Activated T-helper 1 cell treated with anti-CD3 and anti-CD28 coated beads, Interleukin-12 subunit alpha, Interleukin-12 subunit beta, Interleukin-2, Interleukin-4 antibody, amounts not matched to agents 30 ng/mL and 10 ng/mL and 1 ng/mL, durations not matched to agents 14 hours and 24 hours and 36 hours (primary cell): ENCODE measurements at regions of chr12 and their contacts with region 1.

Region 1: DNA sequence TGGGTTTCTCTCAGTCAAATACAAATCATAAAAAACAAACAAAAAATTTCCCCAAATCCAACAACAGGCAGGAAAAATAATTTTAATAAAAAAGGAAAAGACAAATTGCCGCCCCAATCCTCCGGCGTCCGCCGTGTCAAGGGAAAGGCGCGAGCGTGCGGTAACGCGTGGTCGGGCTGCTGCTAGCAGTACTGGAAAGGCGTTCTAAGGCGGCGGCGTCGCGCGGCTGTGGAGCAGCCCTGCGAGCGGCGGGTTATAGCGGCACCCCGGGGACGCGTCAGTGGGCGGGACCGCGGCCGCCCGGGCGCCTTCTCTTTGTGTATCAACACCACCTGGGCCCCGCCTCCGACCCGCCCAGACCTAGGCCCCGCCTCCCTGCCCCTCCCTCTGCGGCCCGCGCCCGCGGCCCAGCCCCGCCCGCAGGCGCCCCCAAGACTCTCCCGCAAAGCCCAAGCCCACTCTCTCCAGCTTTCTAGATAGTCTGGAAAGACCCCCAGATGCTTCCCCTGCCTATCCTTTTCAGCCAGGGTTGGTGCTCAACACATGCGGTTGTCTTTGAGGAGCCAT is at the start of gene SLC38A2:
- DNase-seq: peak; percentile 95
- H3K4me3 Mint-ChIP-seq: peak within 1 kb of the TSS; percentile 92
- H3K27ac Mint-ChIP-seq: peak within 1 kb of the TSS; percentile 99
- H3K4me1 Mint-ChIP-seq: peaks cover 53% of the 10 kb centered on the region
- H3K27me3 Mint-ChIP-seq: peaks cover 3% of the 10 kb centered on the region
- total RNA-seq, gene SLC38A2: 157 and 161 TPM in 2 replicates

Region 2: DNA sequence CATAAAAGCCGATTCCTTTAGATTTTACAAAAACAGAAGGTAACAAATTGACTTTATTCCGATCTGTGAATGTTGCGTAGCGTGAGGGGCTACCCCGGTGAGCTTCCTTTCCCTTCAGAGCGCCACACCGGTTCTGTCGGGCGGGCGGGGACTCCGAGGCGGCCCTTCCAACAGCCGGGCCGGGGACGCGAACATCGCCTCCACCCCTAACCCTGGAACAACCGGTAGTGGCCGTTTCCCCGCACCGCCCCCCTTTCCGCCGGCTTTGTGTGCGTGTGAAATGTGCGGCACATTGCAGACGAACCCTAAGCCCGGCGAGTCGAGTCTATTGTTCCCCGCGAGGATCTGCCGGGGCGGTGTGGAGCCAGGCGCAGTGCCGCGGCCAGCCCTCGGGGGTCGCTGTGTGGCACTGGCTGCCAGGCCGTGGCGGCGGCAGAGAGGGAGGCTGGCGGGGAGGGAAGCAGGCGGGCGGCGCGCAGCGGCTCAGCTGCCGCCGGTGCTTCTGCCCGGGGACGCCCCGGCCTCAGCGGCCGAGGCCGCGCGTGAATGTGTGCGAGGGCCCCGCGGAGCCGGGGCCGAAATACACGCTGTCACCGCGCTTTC is 643.9 kb before region 1 on chr12:
- intact Hi-C with region 1: loop called (anchors 5 kb)
- DNase-seq: peak; percentile 96
- H3K4me3 Mint-ChIP-seq: peak overlapping the region; percentile 99
- H3K27ac Mint-ChIP-seq: peak overlapping the region; percentile 100
- H3K4me1 Mint-ChIP-seq: peaks cover 40% of the 10 kb centered on the region
- H3K27me3 Mint-ChIP-seq: no peaks in the 10 kb centered on the region

Region 3: GRCh38 chr12:46217541-46218321 is 154.9 kb before region 1 on chr12:
- intact Hi-C with region 1: loop called (anchors 1 kb)
- DNase-seq: peak; percentile 64
- H3K4me3 Mint-ChIP-seq: peak overlapping the region; percentile 68
- H3K27ac Mint-ChIP-seq: peak overlapping the region; percentile 92
- H3K4me1 Mint-ChIP-seq: peaks cover 97% of the 10 kb centered on the region
- H3K27me3 Mint-ChIP-seq: no peaks in the 10 kb centered on the region

Region 4: GRCh38 chr12:46382964-46383653 is 10.5 kb after region 1 on chr12:
- intact Hi-C with region 1: loop called (anchors 1 kb)
- DNase-seq: peak; percentile 95
- H3K4me3 Mint-ChIP-seq: peak overlapping the region; percentile 84
- H3K27ac Mint-ChIP-seq: peak overlapping the region; percentile 92
- H3K4me1 Mint-ChIP-seq: peaks cover 54% of the 10 kb centered on the region
- H3K27me3 Mint-ChIP-seq: no peaks in the 10 kb centered on the region

Region 5: GRCh38 chr12:46516933-46517578 is 144.4 kb after region 1 on chr12:
- intact Hi-C with region 1: loop called (anchors 1 kb)
- DNase-seq: no peak
- H3K4me3 Mint-ChIP-seq: peak overlapping the region; percentile 74
- H3K27ac Mint-ChIP-seq: peak overlapping the region; percentile 98
- H3K4me1 Mint-ChIP-seq: peaks cover 60% of the 10 kb centered on the region
- H3K27me3 Mint-ChIP-seq: no peaks in the 10 kb centered on the region

Region 6: GRCh38 chr12:46546634-46547286 is 174.1 kb after region 1 on chr12:
- intact Hi-C with region 1: loop called (anchors 1 kb)
- DNase-seq: peak; percentile 19
- H3K4me3 Mint-ChIP-seq: peak overlapping the region; percentile 34
- H3K27ac Mint-ChIP-seq: peak overlapping the region; percentile 89
- H3K4me1 Mint-ChIP-seq: peaks cover 58% of the 10 kb centered on the region
- H3K27me3 Mint-ChIP-seq: no peaks in the 10 kb centered on the region

Region 7: DNA sequence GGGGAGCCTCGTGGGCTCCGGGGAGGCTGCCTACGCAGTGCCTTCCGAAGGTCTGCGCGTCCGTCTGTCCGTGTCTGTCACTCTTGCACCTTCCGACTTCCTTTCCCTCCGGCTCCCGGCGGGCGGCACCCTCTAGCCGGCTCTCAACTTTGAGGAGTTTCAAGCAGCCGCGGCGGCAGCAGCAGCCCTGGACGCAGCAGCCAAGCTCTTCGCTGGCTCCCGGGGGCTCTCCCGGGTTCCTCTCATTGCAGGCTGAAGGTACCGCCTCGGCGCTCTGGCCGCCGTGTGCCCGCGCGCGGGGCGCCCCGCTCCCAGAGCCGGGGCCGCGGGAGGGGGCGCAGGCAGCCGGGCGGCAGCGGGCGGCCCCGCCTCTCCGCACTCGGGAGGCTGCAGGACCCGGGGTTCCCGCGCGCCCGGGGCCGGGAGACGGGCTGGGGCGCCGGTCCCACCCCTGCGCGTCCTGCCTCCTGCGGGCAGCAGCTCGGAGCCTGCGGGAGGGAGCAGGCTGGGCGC is 706.9 kb after region 1 on chr12 and contains the starts of genes AMIGO2 and PCED1B:
- intact Hi-C with region 1: loop called (anchors 5 kb)
- DNase-seq: peak; percentile 63
- H3K4me3 Mint-ChIP-seq: peak within 1 kb of the TSS; percentile 97
- H3K27ac Mint-ChIP-seq: peak within 1 kb of the TSS; percentile 97
- H3K4me1 Mint-ChIP-seq: peaks cover 81% of the 10 kb centered on the region
- H3K27me3 Mint-ChIP-seq: no peaks in the 10 kb centered on the region
- total RNA-seq, gene AMIGO2: 11.6 and 12.5 TPM in 2 replicates
- total RNA-seq, gene PCED1B: 50.8 and 55.5 TPM in 2 replicates